Left cardiac atrium (tissue), 4 donors: ENCODE measurements at regions of chr5 and their contacts with region 1.

Region 1: GRCh38 chr5:134289509-134290113 is 63.7 kb upstream of the PPP2CA start:
- DNase-seq: peak; percentile 39
- ATAC-seq: peak; percentile 91 to 96

Region 2: DNA sequence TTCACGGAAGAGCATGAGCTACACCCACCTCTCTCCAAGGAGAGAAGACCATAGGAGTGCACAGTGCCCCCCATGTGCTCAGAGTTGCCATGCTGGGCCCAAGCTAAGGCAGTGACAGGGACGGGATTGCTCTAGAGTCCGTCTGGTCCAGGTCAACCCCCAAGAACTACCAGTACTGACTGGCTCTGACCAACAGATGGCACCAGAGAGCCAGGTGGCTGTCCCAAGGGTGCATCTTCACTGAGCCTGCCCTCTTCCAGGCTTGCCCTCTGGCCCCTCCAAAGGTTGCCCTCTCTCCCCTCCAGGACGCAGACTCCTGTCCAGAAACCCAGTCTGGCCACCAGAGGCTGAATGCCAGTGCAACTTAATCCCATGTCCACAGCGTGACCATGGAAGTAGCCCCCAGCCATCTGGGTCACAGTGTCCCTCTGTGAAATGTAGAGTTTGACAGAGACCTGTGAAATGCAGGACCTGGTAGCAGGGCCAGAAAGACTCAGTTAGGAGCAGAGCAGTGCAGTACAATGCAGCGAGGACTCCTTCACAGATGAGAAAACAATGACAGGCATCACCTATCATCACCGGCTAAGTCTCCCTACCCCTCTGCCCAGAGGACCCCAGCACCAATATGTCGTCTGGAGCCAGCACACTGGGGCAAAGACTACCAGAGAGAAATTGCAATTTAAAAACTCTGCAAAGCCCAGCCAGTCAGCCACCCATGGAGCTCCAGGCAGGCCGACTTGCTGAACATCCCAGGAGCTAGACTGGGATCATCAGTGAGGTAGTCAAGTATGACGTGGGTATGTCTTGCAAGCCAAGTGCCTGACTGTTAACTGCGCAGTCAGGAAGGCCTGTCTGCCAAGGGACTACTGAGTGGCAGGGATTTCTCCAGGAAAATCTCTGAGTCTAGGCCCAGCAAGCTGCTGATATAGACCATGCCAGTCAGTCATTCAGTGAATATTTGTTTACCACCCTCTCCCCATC is 105.2 kb before region 1 on chr5:
- intact Hi-C with region 1: loop called (anchors 1 to 2 kb)
- DNase-seq: peak; percentile 52
- ATAC-seq: peak; percentile 90 to 91

Region 3: DNA sequence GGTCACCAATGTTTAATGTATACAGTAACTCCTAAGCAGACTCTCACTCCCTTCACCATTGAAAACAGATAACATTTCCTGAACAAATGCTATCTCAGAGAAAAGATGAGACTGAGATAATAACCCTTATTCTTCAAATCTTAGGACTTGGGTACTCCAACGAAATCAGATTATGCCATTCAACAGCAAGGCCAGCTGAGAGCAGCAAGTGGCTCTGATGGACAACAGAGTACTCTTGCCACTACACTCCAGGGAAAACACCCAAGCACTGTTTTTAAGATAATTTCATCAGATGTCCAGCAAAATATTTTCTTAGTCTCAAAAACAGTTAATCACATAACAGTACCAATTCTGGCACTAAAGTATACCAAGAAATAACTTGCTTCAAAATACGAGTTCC is 73.9 kb before region 1 on chr5:
- intact Hi-C with region 1: no loop called
- DNase-seq: no peak
- ATAC-seq: peak in 1 of 2 donors; percentile 51